ENCODE measurements at regions of chr5 and their contacts with region 1.

Region 1: DNA sequence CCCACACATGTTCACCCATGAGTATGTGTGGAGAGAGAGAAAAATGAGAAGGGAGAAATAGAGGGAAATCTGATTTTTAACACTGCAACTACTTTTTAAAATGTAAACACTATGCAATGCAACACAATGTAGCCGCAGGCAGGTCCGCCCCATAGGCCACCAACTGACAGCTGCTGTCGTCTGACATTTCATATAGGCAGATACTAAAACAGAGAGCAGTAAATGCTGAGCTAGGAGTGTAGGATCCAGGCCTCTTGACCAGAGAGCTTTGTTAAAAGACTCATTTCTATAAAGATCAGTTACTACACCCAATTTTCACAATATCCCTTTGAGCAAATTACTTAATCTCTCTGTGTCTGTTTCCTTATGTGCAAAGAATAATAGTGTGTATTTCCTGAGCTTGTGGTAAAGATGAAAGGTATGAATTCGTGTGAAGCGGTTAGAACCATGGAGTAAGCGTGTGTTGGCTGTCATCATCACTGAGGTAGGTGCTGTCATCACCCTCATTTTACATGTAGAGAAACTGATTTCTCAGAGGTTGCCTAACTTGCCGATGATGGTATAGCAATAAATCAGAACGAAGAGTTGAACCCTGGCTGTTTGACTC is 55.2 kb upstream of the PDE8B start:
- DNase-seq: no peak
- H3K4me3 ChIP-seq: no peak overlapping the region
- H3K27ac ChIP-seq: no peak overlapping the region
- H3K4me1 ChIP-seq: no peaks in the 10 kb centered on the region
- H3K27me3 ChIP-seq: no peaks in the 10 kb centered on the region
- CTCF ChIP-seq: no peak
- POLR2A ChIP-seq: no peak

Region 2: GRCh38 chr5:77224712-77225355 is 69.6 kb after region 1 on chr5:
- intact Hi-C with region 1: loop called in 1 of 2 experiments (anchors 10 kb)
- DNase-seq: no peak
- H3K4me3 ChIP-seq: no peak overlapping the region
- H3K27ac ChIP-seq: no peak overlapping the region
- H3K4me1 ChIP-seq: no peaks in the 10 kb centered on the region
- H3K27me3 ChIP-seq: no peaks in the 10 kb centered on the region
- CTCF ChIP-seq: no peak
- POLR2A ChIP-seq: no peak

Region 3: GRCh38 chr5:77491783-77492652 is 336.7 kb after region 1 on chr5 and contains the start of gene WDR41:
- intact Hi-C with region 1: loop called (anchors 5 to 10 kb)
- DNase-seq: peak; percentile 88 to 93 (median 92)
- H3K4me3 ChIP-seq: peak within 1 kb of the TSS; percentile 61 to 98 (median 86)
- H3K27ac ChIP-seq: peak within 1 kb of the TSS; percentile 88 to 99 (median 94)
- H3K4me1 ChIP-seq: peaks cover 0 to 16% of the 10 kb centered on the region in 2 donors
- H3K27me3 ChIP-seq: no peaks in the 10 kb centered on the region
- CTCF ChIP-seq: peak; percentile 57 to 97 (median 86)
- POLR2A ChIP-seq: peak; percentile 57 to 71
- total RNA-seq, gene WDR41: 24.5 to 63.0 (median 36.4) TPM

Region 4: DNA sequence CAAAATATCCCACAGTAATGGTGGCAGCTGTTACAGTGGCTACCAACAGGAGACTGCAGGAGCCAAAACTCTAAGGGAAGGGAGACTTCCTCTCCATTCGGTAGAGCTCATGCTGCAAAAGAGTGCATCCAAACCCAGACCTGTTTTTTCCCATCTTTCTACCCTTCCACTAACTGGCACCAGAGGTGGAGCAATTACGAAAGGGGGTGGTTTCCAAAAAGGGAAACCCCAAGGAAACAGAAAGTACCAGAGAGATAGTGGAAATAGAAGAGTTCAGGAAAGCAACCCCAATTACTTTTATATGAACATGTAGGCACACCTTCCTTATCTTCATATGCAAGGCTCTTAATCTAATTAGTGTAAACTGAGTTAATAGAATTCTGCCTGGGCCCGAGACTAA is 344.2 kb after region 1 on chr5:
- intact Hi-C with region 1: loop called (anchors 5 to 10 kb)
- DNase-seq: no peak
- H3K4me3 ChIP-seq: no peak overlapping the region
- H3K27ac ChIP-seq: no peak overlapping the region
- H3K4me1 ChIP-seq: no peaks in the 10 kb centered on the region
- H3K27me3 ChIP-seq: no peaks in the 10 kb centered on the region
- CTCF ChIP-seq: no peak
- POLR2A ChIP-seq: no peak